Transverse colon (tissue), 4 donors: ENCODE measurements at regions of chr4 and their contacts with region 1.

Region 1: GRCh38 chr4:136241221-136241986 is 1290.9 kb downstream of the PCDH18 start:
- DNase-seq: no peak
- H3K4me3 ChIP-seq: no peak overlapping the region
- H3K27ac ChIP-seq: no peak overlapping the region
- H3K4me1 ChIP-seq: no peaks in the 10 kb centered on the region
- H3K27me3 ChIP-seq: no peaks in the 10 kb centered on the region
- CTCF ChIP-seq: no peak
- EP300 ChIP-seq: no peak
- POLR2A ChIP-seq: no peak

Region 2: GRCh38 chr4:136203199-136203598 is 38.2 kb before region 1 on chr4:
- in situ Hi-C with region 1: no loop called
- intact Hi-C with region 1: loop called (anchors 2 kb)
- DNase-seq: no peak
- H3K4me3 ChIP-seq: no peak overlapping the region
- H3K27ac ChIP-seq: no peak overlapping the region
- H3K4me1 ChIP-seq: no peaks in the 10 kb centered on the region
- H3K27me3 ChIP-seq: no peaks in the 10 kb centered on the region
- CTCF ChIP-seq: no peak
- EP300 ChIP-seq: no peak
- POLR2A ChIP-seq: no peak